K562 (cell line): ENCODE measurements at regions of chr16 and their contacts with region 1.

Region 1: GRCh38 chr16:78099372-78100161 is at the start of gene WWOX:
- DNase-seq: peak; percentile 93 to 98 (median 94)
- ATAC-seq: peak; percentile 98
- H3K4me3 ChIP-seq: peak within 1 kb of the TSS; percentile 78
- H3K27ac ChIP-seq: peak within 1 kb of the TSS; percentile 85
- H3K4me1 ChIP-seq: peaks cover 8 to 13% of the 10 kb centered on the region in 2 experiments; a peak in 4 of 5 replicates
- H3K27me3 ChIP-seq: no peaks in the 10 kb centered on the region
- CTCF ChIP-seq: peak; percentile 78 to 91 (median 80)
- EP300 ChIP-seq: no peak
- POLR2A ChIP-seq: peak; percentile 76
- RAD21 ChIP-seq: peak; percentile 19 to 51; a peak in 3 of 4 replicates
- polyA plus RNA-seq, gene WWOX: 1.6 to 1.7 TPM

Region 2: DNA sequence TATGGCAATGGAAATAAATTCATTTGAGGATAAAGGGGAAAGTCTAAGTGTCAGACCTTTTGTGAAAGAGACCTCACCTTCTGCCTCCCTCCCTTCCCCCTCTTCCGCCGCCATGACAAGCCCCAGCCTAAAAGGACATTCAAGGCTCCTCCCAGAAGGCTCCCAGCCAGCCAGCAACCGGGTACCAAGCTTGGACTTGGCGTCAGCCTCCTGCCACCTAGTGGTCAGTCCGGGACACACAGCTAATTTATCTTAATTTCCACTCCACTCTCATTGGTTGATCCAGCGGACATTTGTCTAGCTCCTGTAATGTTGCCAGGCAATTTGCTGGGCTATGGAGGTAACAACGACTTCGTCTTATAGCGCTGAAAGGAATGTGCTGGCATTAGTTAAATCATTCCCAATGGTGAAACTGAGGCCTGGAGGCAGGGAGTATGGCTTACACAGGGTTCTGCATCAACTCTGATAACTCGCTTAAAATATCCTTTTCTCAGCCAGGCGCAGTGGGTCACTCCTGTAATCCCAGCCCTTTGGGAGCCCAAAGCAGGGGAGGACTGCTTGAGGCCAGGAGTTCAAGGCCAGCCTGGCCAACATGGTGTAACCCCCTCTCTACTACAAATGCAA is 96.5 kb before region 1 on chr16:
- CTCF ChIA-PET with region 1: no interaction called
- POLR2A ChIA-PET with region 1: no interaction called
- in situ Hi-C with region 1: no loop called
- intact Hi-C with region 1: loop called (anchors 2 kb)
- DNase-seq: peak; percentile 83 to 86 (median 84)
- ATAC-seq: peak; percentile 99
- H3K4me3 ChIP-seq: no peak overlapping the region
- H3K27ac ChIP-seq: no peak overlapping the region
- H3K4me1 ChIP-seq: no peaks in the 10 kb centered on the region
- H3K27me3 ChIP-seq: peaks cover 2 to 10% of the 10 kb centered on the region in 2 experiments; a peak in 2 of 5 replicates
- CTCF ChIP-seq: peak; percentile 85 to 95 (median 94)
- EP300 ChIP-seq: no peak
- POLR2A ChIP-seq: no peak
- RAD21 ChIP-seq: peak; percentile 33 to 69

Region 3: GRCh38 chr16:78022347-78023060 is 77.1 kb before region 1 on chr16 and contains the start of gene CLEC3A:
- CTCF ChIA-PET with region 1: no interaction called
- POLR2A ChIA-PET with region 1: no interaction called
- in situ Hi-C with region 1: no loop called
- intact Hi-C with region 1: no loop called
- DNase-seq: no peak
- ATAC-seq: peak; percentile 44; the same call in 2 of the 3 replicates
- H3K4me3 ChIP-seq: no peak within 1 kb of the TSS
- H3K27ac ChIP-seq: no peak within 1 kb of the TSS
- H3K4me1 ChIP-seq: no peaks in the 10 kb centered on the region
- H3K27me3 ChIP-seq: peaks cover 2 to 4% of the 10 kb centered on the region in 2 experiments; a peak in 2 of 5 replicates
- CTCF ChIP-seq: no peak
- EP300 ChIP-seq: no peak
- POLR2A ChIP-seq: no peak
- RAD21 ChIP-seq: no peak
- polyA plus RNA-seq, gene CLEC3A: not detected